Caco-2 (cell line): ENCODE measurements at regions of chr3 and their contacts with region 1.

Region 1: DNA sequence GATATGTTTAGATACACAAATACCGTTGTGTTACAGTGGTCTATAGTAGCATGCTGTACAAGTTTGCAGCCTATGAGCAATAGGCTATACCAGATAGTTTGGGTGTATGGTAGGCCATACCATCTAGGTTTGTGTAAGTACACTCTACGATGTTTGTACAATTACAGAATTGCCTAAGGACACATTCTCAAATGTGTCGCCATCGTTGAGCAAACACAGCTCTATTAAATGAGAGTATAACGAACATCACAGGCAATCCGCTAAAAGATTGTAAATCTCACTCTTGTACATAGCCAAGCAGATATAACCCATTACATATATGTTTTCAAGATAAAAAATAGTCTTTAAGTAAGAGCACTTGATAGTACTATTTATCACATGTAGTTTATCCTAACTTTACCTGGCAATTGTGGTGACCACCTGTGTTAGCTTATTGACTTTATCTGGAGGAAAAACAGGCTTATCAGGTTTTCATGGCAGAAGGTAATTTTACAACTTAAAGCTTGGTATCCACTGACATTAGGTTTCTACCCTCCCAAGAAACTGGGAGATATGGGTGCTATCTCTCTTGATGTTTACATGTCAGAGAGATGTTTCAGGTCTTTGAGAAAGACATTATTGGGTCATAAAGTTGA is 898.7 kb downstream of the NSUN3 start:
- DNase-seq: peak; percentile 70 to 76
- H3K4me3 ChIP-seq: no peak overlapping the region
- H3K4me3 Mint-ChIP-seq: peak overlapping the region; percentile 9
- H3K27ac Mint-ChIP-seq: peak overlapping the region; percentile 67
- H3K4me1 ChIP-seq: peaks cover 32% of the 10 kb centered on the region
- H3K4me1 Mint-ChIP-seq: peaks cover 10% of the 10 kb centered on the region
- H3K27me3 ChIP-seq: no peaks in the 10 kb centered on the region
- H3K27me3 Mint-ChIP-seq: no peaks in the 10 kb centered on the region
- CTCF ChIP-seq: no peak

Region 2: DNA sequence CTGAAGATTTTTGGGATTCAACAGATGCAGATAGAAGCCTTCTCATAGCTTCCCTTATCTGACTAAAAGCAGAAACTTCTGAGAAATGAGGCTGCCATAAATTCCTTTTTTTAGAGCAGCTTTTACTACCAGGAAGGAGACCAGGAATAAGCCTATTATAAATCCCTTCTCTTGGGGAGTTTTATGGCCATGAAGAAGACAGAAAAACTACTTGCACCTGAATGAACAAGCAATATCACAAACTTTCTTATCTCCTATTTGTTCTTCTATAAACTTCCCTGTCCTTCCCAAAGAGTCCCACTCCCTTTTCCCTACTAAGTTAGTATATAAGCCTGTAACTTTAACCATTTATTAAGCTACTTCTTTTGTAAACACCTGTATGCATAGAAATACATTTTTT is 295.6 kb before region 1 on chr3:
- CTCF ChIA-PET with region 1: no interaction called
- POLR2A ChIA-PET with region 1: no interaction called
- intact Hi-C with region 1: loop called (anchors 10 kb)
- DNase-seq: peak in 1 of 2 experiments; percentile 13
- H3K4me3 ChIP-seq: no peak overlapping the region
- H3K4me3 Mint-ChIP-seq: no peak overlapping the region
- H3K27ac Mint-ChIP-seq: no peak overlapping the region
- H3K4me1 ChIP-seq: 0 out of 2 replicates have a peak, but pooled peaks cover 11% of the 10 kb centered on the region
- H3K4me1 Mint-ChIP-seq: peaks cover 9% of the 10 kb centered on the region
- H3K27me3 ChIP-seq: no peaks in the 10 kb centered on the region
- H3K27me3 Mint-ChIP-seq: no peaks in the 10 kb centered on the region
- CTCF ChIP-seq: no peak

Region 3: GRCh38 chr3:94758751-94759150 is 202.8 kb before region 1 on chr3:
- CTCF ChIA-PET with region 1: no interaction called
- POLR2A ChIA-PET with region 1: no interaction called
- intact Hi-C with region 1: loop called (anchors 10 kb)
- DNase-seq: peak; percentile 24 to 52
- H3K4me3 ChIP-seq: no peak overlapping the region
- H3K4me3 Mint-ChIP-seq: no peak overlapping the region
- H3K27ac Mint-ChIP-seq: no peak overlapping the region
- H3K4me1 ChIP-seq: peaks cover 10% of the 10 kb centered on the region; the same call in 1 of the 2 replicates
- H3K4me1 Mint-ChIP-seq: peaks cover 14% of the 10 kb centered on the region
- H3K27me3 ChIP-seq: no peaks in the 10 kb centered on the region
- H3K27me3 Mint-ChIP-seq: no peaks in the 10 kb centered on the region
- CTCF ChIP-seq: no peak

Region 4: GRCh38 chr3:94811841-94812240 is 149.7 kb before region 1 on chr3:
- CTCF ChIA-PET with region 1: no interaction called
- POLR2A ChIA-PET with region 1: no interaction called
- intact Hi-C with region 1: no loop called
- DNase-seq: peak in 1 of 2 experiments; percentile 3
- H3K4me3 ChIP-seq: no peak overlapping the region
- H3K4me3 Mint-ChIP-seq: no peak overlapping the region
- H3K27ac Mint-ChIP-seq: no peak overlapping the region
- H3K4me1 ChIP-seq: 0 out of 2 replicates have a peak, but pooled peaks cover 4% of the 10 kb centered on the region
- H3K4me1 Mint-ChIP-seq: no peaks in the 10 kb centered on the region
- H3K27me3 ChIP-seq: no peaks in the 10 kb centered on the region
- H3K27me3 Mint-ChIP-seq: no peaks in the 10 kb centered on the region
- CTCF ChIP-seq: no peak

Region 5: GRCh38 chr3:94887076-94887475 is 74.5 kb before region 1 on chr3:
- CTCF ChIA-PET with region 1: no interaction called
- POLR2A ChIA-PET with region 1: no interaction called
- intact Hi-C with region 1: loop called (anchors 2 kb)
- DNase-seq: peak; percentile 44 to 58
- H3K4me3 ChIP-seq: no peak overlapping the region
- H3K4me3 Mint-ChIP-seq: no peak overlapping the region
- H3K27ac Mint-ChIP-seq: peak overlapping the region; percentile 72
- H3K4me1 ChIP-seq: peaks cover 22% of the 10 kb centered on the region
- H3K4me1 Mint-ChIP-seq: no peaks in the 10 kb centered on the region
- H3K27me3 ChIP-seq: no peaks in the 10 kb centered on the region
- H3K27me3 Mint-ChIP-seq: no peaks in the 10 kb centered on the region
- CTCF ChIP-seq: no peak

Region 6: GRCh38 chr3:95341314-95341713 is 379.8 kb after region 1 on chr3:
- CTCF ChIA-PET with region 1: no interaction called
- POLR2A ChIA-PET with region 1: no interaction called
- intact Hi-C with region 1: loop called (anchors 2 kb)
- DNase-seq: peak; percentile 57 to 85
- H3K4me3 ChIP-seq: no peak overlapping the region
- H3K4me3 Mint-ChIP-seq: peak overlapping the region; percentile 19
- H3K27ac Mint-ChIP-seq: no peak overlapping the region
- H3K4me1 ChIP-seq: peaks cover 43% of the 10 kb centered on the region
- H3K4me1 Mint-ChIP-seq: peaks cover 30% of the 10 kb centered on the region
- H3K27me3 ChIP-seq: no peaks in the 10 kb centered on the region
- H3K27me3 Mint-ChIP-seq: no peaks in the 10 kb centered on the region
- CTCF ChIP-seq: no peak